ENCODE measurements at regions of chr10 and their contacts with region 1.

Region 1: GRCh38 chr10:101130984-101131961 is at the start of gene TLX1:
- DNase-seq: no peak
- H3K4me3 ChIP-seq: peak within 1 kb of the TSS in 3 of 4 experiments; percentile 18 to 51 (median 26); a peak in 3 of 8 replicates
- H3K27ac ChIP-seq: no peak within 1 kb of the TSS
- H3K4me1 ChIP-seq: peaks cover 0 to 22% (median 4%) of the 10 kb centered on the region in 4 experiments; a peak in 5 of 7 replicates
- H3K27me3 ChIP-seq: peaks cover 95 to 100% (median 100%) of the 10 kb centered on the region in 4 experiments
- CTCF ChIP-seq: no peak
- EP300 ChIP-seq: no peak
- POLR2A ChIP-seq: no peak
- RAD21 ChIP-seq: no peak
- total RNA-seq, gene TLX1: not detected in 2 replicates

Region 2: GRCh38 chr10:101050208-101051069 is 80.8 kb before region 1 on chr10:
- CTCF ChIA-PET with region 1: interaction called, 10 read pairs
- POLR2A ChIA-PET with region 1: interaction called, 6 read pairs
- DNase-seq: peak in 1 of 2 experiments; percentile 99
- H3K4me3 ChIP-seq: peak overlapping the region in 2 of 4 experiments; percentile 10 to 49; a peak in 3 of 8 replicates
- H3K27ac ChIP-seq: no peak overlapping the region
- H3K4me1 ChIP-seq: peaks cover 9 to 23% (median 17%) of the 10 kb centered on the region in 4 experiments
- H3K27me3 ChIP-seq: peaks cover 38 to 66% (median 60%) of the 10 kb centered on the region in 4 experiments
- CTCF ChIP-seq: peak; percentile 73 to 95 (median 84)
- EP300 ChIP-seq: no peak
- POLR2A ChIP-seq: no peak
- RAD21 ChIP-seq: peak; percentile 64 to 74

Region 3: DNA sequence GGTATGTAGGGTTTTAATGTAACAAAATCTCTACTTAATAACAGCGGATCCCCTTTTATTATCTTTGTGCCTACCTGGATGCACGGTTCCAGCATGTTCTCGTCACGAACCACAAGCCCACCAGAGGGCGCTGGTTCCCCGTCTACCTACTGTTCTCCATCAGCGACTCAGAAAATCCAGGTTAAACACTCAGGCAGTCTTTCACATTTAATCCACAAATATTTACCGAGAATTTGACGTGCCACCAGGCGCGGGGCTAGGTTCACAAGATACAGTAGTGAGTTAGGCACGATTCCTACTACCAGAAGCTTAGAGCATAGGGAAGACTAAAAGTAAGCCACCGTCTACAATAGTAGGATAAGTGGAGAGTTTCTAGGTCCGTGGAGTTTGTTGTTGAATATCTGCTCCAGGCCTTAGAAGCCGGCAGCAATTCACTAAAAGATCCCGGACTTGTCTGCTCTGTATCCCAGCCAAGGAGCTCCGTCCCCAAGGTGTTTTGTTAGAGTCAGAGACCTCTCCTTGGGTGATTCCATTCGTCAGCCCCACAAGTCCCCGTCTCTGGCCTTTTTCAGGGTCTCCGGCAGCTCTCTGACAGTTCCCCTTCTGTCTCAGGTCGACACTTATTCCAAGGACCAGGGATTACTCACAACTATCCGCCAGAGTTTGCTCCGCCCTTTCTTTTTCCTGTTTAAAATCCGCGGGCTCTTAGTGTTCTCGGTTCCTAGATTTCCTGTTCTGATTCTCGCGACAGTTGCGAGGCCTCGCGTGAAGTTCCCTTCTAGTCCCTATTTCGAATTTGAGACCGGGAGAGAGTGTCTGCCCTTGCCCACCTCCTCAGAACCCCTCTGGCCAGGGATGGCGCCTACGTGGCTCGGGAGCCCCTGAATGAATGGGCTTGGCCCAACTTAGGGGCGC is 71.0 kb before region 1 on chr10:
- CTCF ChIA-PET with region 1: interaction called, 240 read pairs
- POLR2A ChIA-PET with region 1: no interaction called
- DNase-seq: peak in 1 of 2 experiments; percentile 95
- H3K4me3 ChIP-seq: peak overlapping the region; percentile 89 to 97 (median 94)
- H3K27ac ChIP-seq: peak overlapping the region; percentile 76
- H3K4me1 ChIP-seq: peaks cover 0 to 26% (median 16%) of the 10 kb centered on the region in 4 experiments; a peak in 6 of 7 replicates
- H3K27me3 ChIP-seq: peaks cover 35 to 42% (median 39%) of the 10 kb centered on the region in 4 experiments
- CTCF ChIP-seq: peak; percentile 85 to 89 (median 86)
- EP300 ChIP-seq: no peak
- POLR2A ChIP-seq: no peak; a peak in 1 of 3 replicates
- RAD21 ChIP-seq: peak; percentile 77 to 83

Region 4: GRCh38 chr10:101189541-101190401 is 58.5 kb after region 1 on chr10:
- CTCF ChIA-PET with region 1: no interaction called
- POLR2A ChIA-PET with region 1: no interaction called
- DNase-seq: peak; percentile 21 to 64
- H3K4me3 ChIP-seq: peak overlapping the region in 1 of 4 experiments; percentile 5; a peak in 1 of 8 replicates
- H3K27ac ChIP-seq: no peak overlapping the region
- H3K4me1 ChIP-seq: peaks cover 0 to 18% (median 9%) of the 10 kb centered on the region in 4 experiments; a peak in 6 of 7 replicates
- H3K27me3 ChIP-seq: no peaks in the 10 kb centered on the region; a peak in 2 of 7 replicates
- CTCF ChIP-seq: no peak
- EP300 ChIP-seq: no peak
- POLR2A ChIP-seq: no peak
- RAD21 ChIP-seq: no peak

Measured in H1 (cell line).